Ovary (tissue), 10 donors: ENCODE measurements at regions of chrX and their contacts with region 1.

Region 1: GRCh38 chrX:70133303-70134115 is at the start of gene IGBP1:
- DNase-seq: peak; percentile 72 to 89 (median 81)
- H3K4me3 ChIP-seq: peak within 1 kb of the TSS; percentile 54
- H3K27ac ChIP-seq: peak within 1 kb of the TSS in 1 of 2 donors; percentile 43
- H3K4me1 ChIP-seq: peaks cover 1% of the 10 kb centered on the region
- H3K27me3 ChIP-seq: no peaks in the 10 kb centered on the region
- CTCF ChIP-seq: peak in 2 of 3 donors; percentile 20 to 41
- EP300 ChIP-seq: no peak
- POLR2A ChIP-seq: peak; percentile 29
- total RNA-seq, gene IGBP1: 63.3 to 121 (median 95.7) TPM

Region 2: GRCh38 chrX:70433848-70434351 is 300.4 kb after region 1 on chrX:
- intact Hi-C with region 1: loop called in 1 of 4 experiments (anchors 10 kb)
- DNase-seq: peak; percentile 54 to 75 (median 75)
- H3K4me3 ChIP-seq: peak overlapping the region; percentile 52
- H3K27ac ChIP-seq: peak overlapping the region; percentile 28 to 85
- H3K4me1 ChIP-seq: peaks cover 5% of the 10 kb centered on the region
- H3K27me3 ChIP-seq: no peaks in the 10 kb centered on the region
- CTCF ChIP-seq: peak; percentile 51 to 61 (median 55)
- EP300 ChIP-seq: no peak
- POLR2A ChIP-seq: no peak

Region 3: DNA sequence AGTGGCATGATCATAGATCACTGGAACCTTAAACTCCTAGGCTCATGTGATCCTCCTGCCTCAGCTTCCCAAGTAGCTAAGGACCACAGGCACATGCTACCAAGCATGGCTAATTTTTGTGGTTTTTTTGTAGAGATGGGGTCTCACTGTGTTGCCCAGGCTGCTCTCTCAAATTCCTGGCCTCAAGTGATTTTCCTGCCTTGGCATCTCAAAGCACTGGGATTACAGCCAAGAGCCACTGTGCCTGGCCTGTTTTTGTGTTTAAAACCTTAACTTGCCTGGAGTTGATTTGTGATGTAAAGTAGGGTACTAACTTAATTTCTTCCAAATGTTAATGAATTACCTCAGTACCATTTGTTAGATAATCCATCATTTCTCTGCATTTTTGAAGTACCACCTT is 333.5 kb after region 1 on chrX:
- intact Hi-C with region 1: no loop called
- DNase-seq: no peak
- H3K4me3 ChIP-seq: no peak overlapping the region
- H3K27ac ChIP-seq: no peak overlapping the region
- H3K4me1 ChIP-seq: no peaks in the 10 kb centered on the region
- H3K27me3 ChIP-seq: no peaks in the 10 kb centered on the region
- CTCF ChIP-seq: no peak
- EP300 ChIP-seq: no peak
- POLR2A ChIP-seq: no peak